Heart left ventricle (tissue), 16 donors: ENCODE measurements at regions of chr14 and their contacts with region 1.

Region 1: GRCh38 chr14:99683619-99684355 is at the start of gene CYP46A1:
- DNase-seq: peak; percentile 100
- ATAC-seq: peak; percentile 97 to 99 (median 98)
- H3K4me3 ChIP-seq: peak within 1 kb of the TSS; percentile 58 to 96 (median 82)
- H3K27ac ChIP-seq: peak within 1 kb of the TSS; percentile 14 to 92 (median 80)
- H3K4me1 ChIP-seq: peaks cover 0 to 24% (median 13%) of the 10 kb centered on the region in 12 donors
- H3K27me3 ChIP-seq: peaks cover 0 to 6% (median 0%) of the 10 kb centered on the region in 9 donors
- CTCF ChIP-seq: peak in 1 of 12 donors; percentile 3
- POLR2A ChIP-seq: peak in 1 of 2 donors; percentile 28
- total RNA-seq, gene CYP46A1: 2.3 to 8.0 (median 3.5) TPM

Region 2: DNA sequence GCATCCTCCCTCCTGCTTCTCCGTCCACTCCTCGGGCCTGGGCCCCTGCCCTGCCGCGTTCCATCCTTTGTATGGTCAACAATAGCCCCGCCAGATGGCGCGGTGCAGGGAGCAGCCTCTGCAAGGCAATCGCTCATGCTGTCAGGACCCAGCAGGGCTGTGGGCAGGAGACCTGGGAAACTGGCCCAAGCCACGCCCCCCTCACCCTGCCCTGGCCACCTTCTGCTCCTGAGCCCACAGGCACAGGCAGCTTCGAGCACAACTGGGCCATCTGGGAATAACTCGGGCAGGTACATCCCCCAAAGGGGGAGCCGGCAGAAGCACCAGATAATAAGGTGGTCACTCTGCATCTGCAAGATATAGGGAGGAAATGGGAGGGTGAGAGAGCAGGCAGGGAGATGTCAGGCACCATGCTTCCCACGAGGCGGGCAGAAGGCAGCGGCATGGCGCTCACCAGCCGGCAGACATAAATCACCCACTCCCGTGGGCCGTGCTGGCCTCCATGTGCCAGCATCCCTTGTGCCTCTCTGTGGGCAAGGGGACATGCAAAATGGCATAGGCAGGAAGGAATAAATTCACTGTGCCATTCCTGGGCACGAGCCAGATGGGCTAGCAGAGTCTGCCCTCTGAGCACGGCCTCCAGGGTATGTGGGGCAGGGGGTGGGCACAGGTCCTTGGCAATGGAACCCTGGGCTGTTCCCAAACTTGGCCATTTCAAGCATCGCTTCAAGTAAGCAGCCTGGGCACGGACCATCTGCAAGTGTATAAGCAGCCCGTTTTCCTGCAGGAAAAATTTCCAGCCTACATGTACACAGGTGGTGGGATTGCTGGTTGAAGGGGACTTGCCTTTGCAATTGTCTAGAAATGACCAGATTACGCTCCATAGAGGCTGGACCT is 120.3 kb before region 1 on chr14:
- intact Hi-C with region 1: no loop called
- DNase-seq: peak; percentile 76 to 91 (median 86)
- ATAC-seq: peak; percentile 73 to 83 (median 76)
- H3K4me3 ChIP-seq: no peak overlapping the region
- H3K27ac ChIP-seq: peak overlapping the region in 10 of 12 donors; percentile 20 to 86 (median 70)
- H3K4me1 ChIP-seq: peaks cover 6 to 80% (median 56%) of the 10 kb centered on the region in 12 donors
- H3K27me3 ChIP-seq: no peaks in the 10 kb centered on the region
- CTCF ChIP-seq: peak in 11 of 12 donors; percentile 14 to 57 (median 45)
- POLR2A ChIP-seq: no peak

Region 3: GRCh38 chr14:99729991-99730868 is 46.4 kb after region 1 on chr14:
- intact Hi-C with region 1: loop called in 1 of 10 experiments (anchors 5 kb)
- DNase-seq: peak; percentile 61 to 82 (median 70)
- ATAC-seq: peak in 3 of 4 donors; percentile 39 to 73 (median 51)
- H3K4me3 ChIP-seq: peak overlapping the region; percentile 37 to 69 (median 58)
- H3K27ac ChIP-seq: peak overlapping the region in 6 of 12 donors; percentile 26 to 66 (median 42)
- H3K4me1 ChIP-seq: peaks cover 0 to 57% (median 28%) of the 10 kb centered on the region in 12 donors
- H3K27me3 ChIP-seq: peaks cover 0 to 7% (median 0%) of the 10 kb centered on the region in 9 donors
- CTCF ChIP-seq: peak; percentile 60 to 97 (median 94)
- POLR2A ChIP-seq: no peak

Region 4: DNA sequence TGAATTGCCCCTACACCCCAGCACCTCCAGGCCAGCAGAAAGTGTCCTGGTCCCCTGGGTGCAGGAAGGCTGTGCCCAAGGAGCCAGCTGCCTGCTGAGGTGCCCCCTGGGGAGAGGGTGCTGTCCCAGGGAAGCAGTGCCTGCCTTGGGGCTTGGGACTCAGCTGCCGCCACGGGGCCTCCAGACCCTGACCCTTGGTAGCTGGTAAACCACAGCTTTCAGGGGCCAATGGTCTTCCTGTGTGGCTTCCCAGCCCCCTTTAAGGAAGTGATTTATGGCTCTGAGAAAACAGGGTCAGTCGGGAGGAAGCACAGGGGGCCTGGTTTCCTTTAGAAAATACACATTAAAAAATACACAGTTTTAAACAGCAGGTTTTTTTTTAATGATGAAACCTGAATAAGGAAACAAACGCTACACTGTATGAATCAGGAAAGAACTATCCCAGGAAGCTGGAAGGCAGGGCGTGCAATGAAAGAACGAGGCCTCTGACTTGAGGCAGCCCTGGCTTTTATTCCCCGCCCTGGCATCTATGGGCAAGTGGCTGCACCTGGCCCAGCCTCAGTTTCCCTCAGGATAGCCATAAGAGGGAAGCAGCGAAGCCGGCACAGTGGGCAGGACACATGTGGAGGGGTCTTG is 68.8 kb after region 1 on chr14:
- intact Hi-C with region 1: no loop called
- DNase-seq: no peak
- ATAC-seq: peak in 1 of 4 donors; percentile 10
- H3K4me3 ChIP-seq: no peak overlapping the region
- H3K27ac ChIP-seq: peak overlapping the region in 10 of 12 donors; percentile 8 to 77 (median 53)
- H3K4me1 ChIP-seq: peaks cover 18 to 86% (median 53%) of the 10 kb centered on the region in 12 donors
- H3K27me3 ChIP-seq: no peaks in the 10 kb centered on the region
- CTCF ChIP-seq: no peak
- POLR2A ChIP-seq: no peak

Region 5: GRCh38 chr14:99774556-99775307 is 90.9 kb after region 1 on chr14:
- intact Hi-C with region 1: no loop called
- DNase-seq: peak in 1 of 5 donors; percentile 52
- ATAC-seq: peak in 2 of 4 donors; percentile 20 to 22
- H3K4me3 ChIP-seq: no peak overlapping the region
- H3K27ac ChIP-seq: peak overlapping the region in 1 of 12 donors; percentile 86
- H3K4me1 ChIP-seq: peaks cover 0 to 21% (median 8%) of the 10 kb centered on the region in 12 donors
- H3K27me3 ChIP-seq: no peaks in the 10 kb centered on the region
- CTCF ChIP-seq: no peak
- POLR2A ChIP-seq: no peak

Region 6: DNA sequence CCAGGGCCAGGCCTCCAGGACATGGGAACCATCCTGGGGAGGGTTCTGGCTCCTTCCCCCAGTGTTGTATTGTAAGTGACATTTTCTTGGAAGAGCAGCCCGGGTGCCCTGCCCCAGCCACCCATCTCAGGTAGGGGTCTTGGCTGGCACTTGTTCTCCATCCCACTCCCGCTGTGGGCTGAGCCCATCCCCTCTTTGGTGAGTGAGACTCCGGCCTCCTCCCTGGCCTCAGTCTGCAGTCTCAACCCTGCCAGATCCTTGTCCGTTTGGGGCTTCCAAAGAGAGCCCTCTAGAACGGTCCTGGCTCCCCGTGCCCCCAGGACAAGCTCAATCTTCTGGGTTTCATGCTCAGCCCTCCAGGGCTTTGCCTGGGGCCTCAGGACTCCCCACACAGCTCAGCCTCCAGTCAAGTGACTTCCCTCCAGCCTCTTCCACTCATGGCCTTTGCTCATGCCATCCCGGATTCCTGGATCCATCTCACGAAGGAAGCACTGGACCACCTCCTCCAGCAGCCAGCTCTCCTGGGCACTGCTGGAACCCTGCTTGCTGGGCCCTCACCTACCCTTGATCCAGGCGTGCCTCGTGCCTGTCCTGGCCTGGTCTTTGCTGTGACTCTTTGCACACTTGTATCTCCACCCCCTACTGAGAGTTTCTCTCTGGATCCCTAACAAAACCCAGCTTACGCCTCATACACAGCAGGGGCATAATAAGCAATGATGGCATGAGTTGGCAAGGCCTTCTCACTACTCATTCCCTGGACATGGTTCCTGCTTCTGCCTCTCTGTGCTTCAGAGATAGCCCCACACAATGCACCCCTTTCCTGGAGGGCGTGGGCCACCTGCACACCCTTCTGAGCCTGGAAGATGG is 1517.1 kb after region 1 on chr14:
- intact Hi-C with region 1: no loop called
- DNase-seq: peak in 1 of 5 donors; percentile 6
- ATAC-seq: no peak
- H3K4me3 ChIP-seq: no peak overlapping the region
- H3K27ac ChIP-seq: no peak overlapping the region
- H3K4me1 ChIP-seq: no peaks in the 10 kb centered on the region
- H3K27me3 ChIP-seq: no peaks in the 10 kb centered on the region
- CTCF ChIP-seq: no peak
- POLR2A ChIP-seq: no peak